Activated CD8-positive, alpha-beta T cell treated with anti-CD3 and anti-CD28 coated beads, Interleukin-2, amount 10 ng/mL, durations not matched to agents 7 days and 5 days (primary cell): ENCODE measurements at regions of chr16 and their contacts with region 1.

Region 1: DNA sequence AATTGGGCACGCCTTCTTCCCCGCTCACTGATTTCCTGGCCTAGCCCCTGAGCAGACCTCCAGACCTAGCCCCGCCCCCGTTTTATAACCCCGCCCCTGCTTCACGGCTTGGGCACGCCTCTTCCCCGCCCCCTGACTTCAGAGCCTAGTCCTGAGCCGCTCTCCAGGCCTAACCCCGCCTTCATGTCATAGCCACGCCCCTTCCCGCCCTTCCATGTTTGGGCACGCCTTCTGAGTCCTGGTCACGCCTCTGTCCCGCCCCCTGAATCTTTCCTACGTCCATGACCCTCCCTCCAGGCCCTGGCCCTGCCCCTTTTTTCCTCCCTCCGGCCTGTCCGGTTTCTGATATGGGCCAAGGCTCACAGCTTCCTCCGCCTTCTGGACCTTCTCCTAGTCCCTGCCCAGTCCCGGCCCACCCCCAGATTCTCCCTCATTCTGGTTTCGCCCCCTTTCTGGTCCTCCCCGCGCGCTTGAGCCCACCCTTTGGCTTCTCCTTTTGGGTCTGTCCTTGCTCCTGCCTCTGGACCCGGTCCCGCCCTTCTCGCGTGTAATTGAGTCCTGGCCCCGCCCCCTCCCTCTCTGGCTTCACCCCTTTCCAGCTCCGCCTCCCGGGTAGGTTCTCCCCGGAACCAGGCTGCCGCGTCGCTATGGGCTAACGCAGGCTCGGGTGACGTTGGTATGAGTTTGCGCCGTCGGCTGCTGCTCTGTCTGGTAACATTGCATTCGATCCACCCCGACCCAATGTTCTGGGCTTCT is 15.1 kb upstream of the EEF2K start:
- DNase-seq: peak; percentile 100
- ATAC-seq: peak; percentile 63
- H3K4me3 Mint-ChIP-seq: peak overlapping the region; percentile 91
- H3K27ac Mint-ChIP-seq: peak overlapping the region; percentile 99
- H3K4me1 Mint-ChIP-seq: peaks cover 59% of the 10 kb centered on the region
- H3K27me3 Mint-ChIP-seq: no peaks in the 10 kb centered on the region

Region 2: GRCh38 chr16:21952793-21953540 is 238.0 kb before region 1 on chr16 and contains the start of gene UQCRC2:
- CTCF ChIA-PET with region 1: interaction called, 41 read pairs
- POLR2A ChIA-PET with region 1: interaction called, 12 read pairs
- DNase-seq: peak; percentile 90
- ATAC-seq: peak; percentile 94
- H3K4me3 Mint-ChIP-seq: peak within 1 kb of the TSS; percentile 94
- H3K27ac Mint-ChIP-seq: peak within 1 kb of the TSS; percentile 99
- H3K4me1 Mint-ChIP-seq: peaks cover 52% of the 10 kb centered on the region
- H3K27me3 Mint-ChIP-seq: no peaks in the 10 kb centered on the region
- total RNA-seq, gene UQCRC2: 231 to 238 TPM

Region 3: GRCh38 chr16:22001591-22001990 is 189.4 kb before region 1 on chr16:
- CTCF ChIA-PET with region 1: interaction called, 54 read pairs
- POLR2A ChIA-PET with region 1: interaction called, 7 read pairs
- DNase-seq: no peak
- ATAC-seq: no peak
- H3K4me3 Mint-ChIP-seq: no peak overlapping the region
- H3K27ac Mint-ChIP-seq: no peak overlapping the region
- H3K4me1 Mint-ChIP-seq: peaks cover 11% of the 10 kb centered on the region
- H3K27me3 Mint-ChIP-seq: no peaks in the 10 kb centered on the region

Region 4: GRCh38 chr16:22098405-22099255 is 92.3 kb before region 1 on chr16:
- CTCF ChIA-PET with region 1: interaction called, 22 read pairs
- POLR2A ChIA-PET with region 1: no interaction called
- DNase-seq: peak; percentile 27
- ATAC-seq: peak; percentile 84
- H3K4me3 Mint-ChIP-seq: no peak overlapping the region
- H3K27ac Mint-ChIP-seq: no peak overlapping the region
- H3K4me1 Mint-ChIP-seq: peaks cover 2% of the 10 kb centered on the region
- H3K27me3 Mint-ChIP-seq: peaks cover 8% of the 10 kb centered on the region

Region 5: DNA sequence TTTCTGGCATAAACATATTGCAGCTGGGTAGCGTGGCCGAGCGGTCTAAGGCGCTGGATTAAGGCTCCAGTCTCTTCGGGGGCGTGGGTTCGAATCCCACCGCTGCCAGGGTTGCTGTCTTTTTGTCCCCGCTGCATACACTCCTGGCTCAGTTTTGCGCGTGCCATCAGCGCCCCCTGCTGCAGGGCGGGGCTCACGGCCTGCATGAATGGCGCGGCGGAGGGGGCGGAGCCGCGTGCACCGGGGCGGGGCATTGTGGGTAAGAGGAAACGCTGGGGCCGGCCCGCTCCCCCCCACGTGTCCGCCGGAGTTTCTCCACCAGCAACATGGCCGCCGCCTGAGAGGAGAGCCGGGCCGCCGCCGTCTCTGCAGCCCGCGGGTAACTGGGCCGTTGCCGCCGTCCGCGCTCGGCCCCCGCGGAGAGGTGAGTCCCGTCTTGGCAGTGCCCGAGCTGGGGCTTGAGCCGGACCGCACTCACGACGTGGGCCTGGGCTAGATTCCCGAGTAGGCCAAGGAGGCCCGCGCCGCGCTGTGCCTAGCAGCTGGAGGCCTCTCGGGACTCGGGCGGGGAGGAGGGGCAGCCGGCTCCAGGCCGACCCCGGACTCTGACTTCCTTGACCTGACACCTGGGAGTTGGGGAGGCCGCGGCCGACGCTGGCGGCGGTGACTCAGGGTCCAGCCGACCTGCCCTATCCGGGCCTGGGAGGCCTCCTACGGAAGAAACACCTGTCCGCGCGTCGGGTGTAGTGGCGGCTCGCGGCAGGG is 106.3 kb after region 1 on chr16 and contains the start of gene POLR3E:
- CTCF ChIA-PET with region 1: interaction called, 355 read pairs
- POLR2A ChIA-PET with region 1: interaction called, 13 read pairs
- DNase-seq: peak; percentile 100
- ATAC-seq: peak; percentile 87
- H3K4me3 Mint-ChIP-seq: peak within 1 kb of the TSS; percentile 92
- H3K27ac Mint-ChIP-seq: peak within 1 kb of the TSS; percentile 93
- H3K4me1 Mint-ChIP-seq: peaks cover 27% of the 10 kb centered on the region
- H3K27me3 Mint-ChIP-seq: peaks cover 2% of the 10 kb centered on the region
- total RNA-seq, gene POLR3E: 43.8 to 49.9 TPM

Region 6: GRCh38 chr16:22322021-22322471 is 131.1 kb after region 1 on chr16:
- CTCF ChIA-PET with region 1: no interaction called
- POLR2A ChIA-PET with region 1: no interaction called
- DNase-seq: no peak
- ATAC-seq: no peak
- H3K4me3 Mint-ChIP-seq: no peak overlapping the region
- H3K27ac Mint-ChIP-seq: no peak overlapping the region
- H3K4me1 Mint-ChIP-seq: no peaks in the 10 kb centered on the region
- H3K27me3 Mint-ChIP-seq: no peaks in the 10 kb centered on the region

Region 7: DNA sequence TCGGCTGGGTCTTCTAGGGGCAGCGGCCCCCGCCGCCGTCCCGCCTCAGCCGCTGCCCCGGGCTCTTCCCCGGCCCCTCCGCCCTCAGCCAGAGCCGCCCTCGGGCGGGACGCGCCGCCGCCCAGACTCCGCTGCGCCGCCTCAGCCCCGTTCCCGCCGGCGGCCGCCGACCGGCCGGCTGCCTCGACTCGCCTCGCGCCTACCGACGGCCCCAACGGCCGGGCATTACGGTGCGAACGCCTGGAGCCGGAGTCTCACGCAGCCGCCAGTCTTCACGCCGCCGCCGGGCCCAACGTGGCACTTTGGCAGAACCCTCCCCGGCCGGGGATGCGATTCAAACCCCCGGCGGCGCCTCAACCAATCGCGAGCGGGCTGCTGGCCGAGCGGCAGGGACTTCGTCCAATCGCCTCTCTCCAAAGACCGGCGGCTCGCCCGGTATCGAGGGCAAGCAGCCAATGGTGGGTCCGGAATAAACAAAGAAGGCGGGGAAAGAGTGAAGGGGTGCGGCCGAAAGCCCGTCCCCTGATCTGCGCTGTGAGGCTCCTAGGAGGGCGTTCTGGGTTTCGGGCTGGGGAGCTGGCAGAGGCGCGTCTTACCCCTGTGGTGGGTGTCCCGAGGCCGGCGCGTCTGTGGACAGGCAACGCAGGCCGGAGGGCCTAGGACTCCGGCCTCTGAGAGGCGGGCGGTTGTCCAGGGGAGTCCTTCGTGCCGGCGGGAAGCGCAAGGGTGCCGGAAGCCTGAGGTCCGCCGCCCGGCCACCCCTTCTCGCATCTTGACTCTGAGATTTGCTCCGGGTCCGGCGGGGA is 183.6 kb after region 1 on chr16 and contains the start of gene CDR2:
- CTCF ChIA-PET with region 1: no interaction called
- POLR2A ChIA-PET with region 1: no interaction called
- DNase-seq: peak; percentile 99
- ATAC-seq: peak; percentile 95
- H3K4me3 Mint-ChIP-seq: peak within 1 kb of the TSS; percentile 97
- H3K27ac Mint-ChIP-seq: peak within 1 kb of the TSS; percentile 91
- H3K4me1 Mint-ChIP-seq: peaks cover 51% of the 10 kb centered on the region
- H3K27me3 Mint-ChIP-seq: no peaks in the 10 kb centered on the region
- total RNA-seq, gene CDR2: 39.1 to 44.6 TPM